PC-3 (cell line): ENCODE measurements at regions of chr6 and their contacts with region 1.

Region 1: DNA sequence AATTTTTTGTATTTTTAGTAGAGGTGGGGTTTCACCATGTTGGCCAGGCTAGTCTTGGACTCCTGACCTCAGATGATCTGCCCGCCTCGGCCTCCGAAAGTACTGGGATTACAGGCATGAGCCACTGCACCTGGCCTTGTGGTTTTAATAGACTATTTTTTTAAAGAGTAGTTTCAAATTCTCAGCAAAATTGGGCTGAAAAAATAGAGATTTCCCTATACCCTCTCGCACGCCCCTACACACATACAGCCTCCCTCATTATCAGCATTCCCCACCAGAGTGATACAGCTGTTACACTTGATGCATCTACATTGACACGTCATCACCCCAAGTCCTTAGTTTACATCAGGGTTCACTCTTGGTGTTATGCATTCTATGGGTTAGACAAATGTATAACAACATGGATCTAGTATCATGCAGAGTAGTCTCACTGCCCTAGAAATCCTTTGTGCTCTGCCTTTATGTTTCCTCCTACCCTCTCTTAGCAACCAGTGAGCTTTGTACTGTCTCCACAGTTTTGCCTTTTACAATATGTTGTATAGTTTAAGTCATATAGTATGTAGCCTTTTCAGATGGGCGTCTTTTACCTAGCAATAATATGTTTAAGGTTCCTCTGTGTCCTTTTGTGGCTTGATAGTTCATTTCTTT is 103.6 kb downstream of the CDYL start:
- DNase-seq: no peak
- ATAC-seq: peak; percentile 67
- H3K4me3 ChIP-seq: no peak overlapping the region; the same call in 1 of the 2 replicates
- H3K27ac ChIP-seq: peak overlapping the region; percentile 62
- H3K4me1 ChIP-seq: peaks cover 21% of the 10 kb centered on the region
- H3K27me3 ChIP-seq: no peaks in the 10 kb centered on the region
- CTCF ChIP-seq: no peak

Region 2: GRCh38 chr6:4896401-4896800 is 16.6 kb after region 1 on chr6:
- CTCF ChIA-PET with region 1: no interaction called
- POLR2A ChIA-PET with region 1: no interaction called
- intact Hi-C with region 1: no loop called
- DNase-seq: no peak
- ATAC-seq: no peak
- H3K4me3 ChIP-seq: no peak overlapping the region
- H3K27ac ChIP-seq: no peak overlapping the region
- H3K4me1 ChIP-seq: no peaks in the 10 kb centered on the region
- H3K27me3 ChIP-seq: no peaks in the 10 kb centered on the region
- CTCF ChIP-seq: no peak

Region 3: DNA sequence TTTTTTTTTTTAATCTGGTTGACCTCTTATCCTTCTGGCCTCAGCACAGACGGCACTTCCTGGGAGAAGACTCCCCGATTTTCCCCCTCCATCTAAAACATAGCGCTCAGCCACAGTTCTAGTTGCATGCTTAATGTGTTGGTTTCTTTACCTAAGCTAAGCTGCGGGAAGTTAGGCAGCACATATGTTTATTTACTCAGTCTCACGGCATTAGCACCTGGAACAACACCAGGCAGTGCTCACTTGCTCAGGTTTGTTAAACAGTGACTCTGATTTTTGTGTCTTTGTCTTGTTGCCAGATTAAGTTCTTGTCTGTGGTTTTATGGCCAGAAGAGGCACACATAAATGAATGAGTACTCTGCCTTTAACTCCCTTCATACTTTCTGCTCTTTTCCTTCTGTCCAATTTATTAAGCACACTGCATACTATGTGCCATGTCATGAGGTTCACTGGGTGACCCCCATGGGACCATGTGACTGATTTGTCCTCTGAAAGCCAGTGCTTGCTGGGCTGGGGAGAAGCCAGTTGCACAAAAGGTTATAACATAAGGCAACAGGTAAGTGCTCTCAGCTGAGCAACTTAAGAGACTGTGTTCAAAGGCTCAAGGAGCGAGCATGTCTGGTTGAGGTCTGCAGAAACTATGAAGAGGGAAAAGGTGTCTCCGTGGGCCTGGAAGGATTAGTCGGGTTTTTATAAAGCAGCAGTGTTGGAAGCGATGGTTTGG is 30.4 kb after region 1 on chr6:
- CTCF ChIA-PET with region 1: no interaction called
- POLR2A ChIA-PET with region 1: no interaction called
- intact Hi-C with region 1: loop called (anchors 1 kb)
- DNase-seq: peak; percentile 50
- ATAC-seq: peak; percentile 72
- H3K4me3 ChIP-seq: no peak overlapping the region
- H3K27ac ChIP-seq: no peak overlapping the region
- H3K4me1 ChIP-seq: peaks cover 38% of the 10 kb centered on the region
- H3K27me3 ChIP-seq: no peaks in the 10 kb centered on the region
- CTCF ChIP-seq: no peak

Region 4: GRCh38 chr6:4941782-4942672 is 62.2 kb after region 1 on chr6:
- CTCF ChIA-PET with region 1: no interaction called
- POLR2A ChIA-PET with region 1: no interaction called
- intact Hi-C with region 1: no loop called
- DNase-seq: peak; percentile 95
- ATAC-seq: peak; percentile 95
- H3K4me3 ChIP-seq: no peak overlapping the region; the same call in 1 of the 2 replicates
- H3K27ac ChIP-seq: peak overlapping the region; percentile 43
- H3K4me1 ChIP-seq: peaks cover 30% of the 10 kb centered on the region
- H3K27me3 ChIP-seq: no peaks in the 10 kb centered on the region
- CTCF ChIP-seq: no peak